ENCODE measurements at regions of chr10 and their contacts with region 1.

Region 1: DNA sequence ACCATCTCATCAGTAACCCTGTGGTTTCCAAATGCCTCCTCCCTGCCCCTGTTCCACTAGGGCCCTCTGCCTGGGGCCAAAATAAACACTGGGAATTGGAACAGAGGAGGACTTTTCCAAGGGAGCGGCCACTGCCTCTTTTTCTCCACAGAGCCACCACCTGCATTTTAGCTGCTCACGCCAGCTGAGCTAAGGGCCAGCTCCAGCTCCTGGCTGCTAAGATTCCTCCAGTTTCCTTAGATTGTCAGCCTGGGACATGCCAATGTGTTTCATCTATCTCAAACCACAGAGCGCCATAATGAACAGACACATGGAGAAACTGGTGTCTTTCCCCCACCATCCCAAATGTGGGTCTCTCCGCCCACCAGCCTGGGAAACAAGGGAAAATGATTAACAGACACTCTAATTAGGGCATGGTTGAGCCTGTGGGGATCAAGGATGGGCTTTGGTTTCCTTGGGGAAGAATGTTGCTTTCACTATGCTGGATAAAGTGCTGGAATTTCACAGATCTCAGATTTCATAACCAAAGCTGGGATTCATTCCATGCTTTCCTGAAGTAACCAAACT is 52.2 kb downstream of the ASB13 start:
- DNase-seq: no peak
- ATAC-seq: peak; percentile 23 to 28

Region 2: DNA sequence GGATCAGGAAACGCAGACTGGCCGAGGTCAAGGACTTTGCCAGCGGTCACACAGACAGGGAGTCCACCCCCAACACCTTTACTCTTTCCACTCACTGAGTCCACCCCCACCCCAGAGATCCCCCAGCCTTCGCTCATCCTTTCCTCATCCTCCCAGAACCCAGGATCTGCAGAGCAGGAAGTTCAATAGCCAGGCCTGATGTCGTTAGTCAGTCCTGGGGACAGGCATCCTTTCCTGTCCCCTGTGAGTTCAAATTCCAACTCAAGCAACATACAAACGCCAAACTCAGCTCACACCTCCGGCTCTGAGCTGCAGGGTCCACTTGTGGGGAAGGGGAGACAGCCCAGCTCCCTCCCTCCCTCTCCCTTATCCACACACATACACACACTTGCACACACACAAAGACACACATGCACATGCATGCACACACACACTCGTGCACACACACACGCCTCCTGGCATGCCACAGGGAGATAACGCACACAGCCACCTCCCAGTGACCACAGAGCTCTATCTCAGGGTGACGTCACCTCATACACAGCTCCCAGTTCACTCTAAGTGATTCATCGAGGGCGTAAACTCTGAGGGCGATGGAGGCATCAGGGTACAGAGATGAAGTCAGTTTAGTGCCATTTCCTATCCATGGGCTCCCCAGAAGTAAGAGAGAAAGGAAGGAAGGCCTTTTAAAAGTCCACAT is 65.6 kb before region 1 on chr10:
- intact Hi-C with region 1: loop called in 1 of 2 experiments (anchors 10 kb)
- DNase-seq: peak; percentile 82
- ATAC-seq: peak; percentile 24 to 87

Measured in left cardiac atrium (tissue), 4 donors.